ENCODE measurements at regions of chr1 and their contacts with region 1.

Region 1: GRCh38 chr1:205584732-205585131 is 47.1 kb downstream of the ELK4 start:
- DNase-seq: no peak
- ATAC-seq: no peak
- H3K4me3 ChIP-seq: no peak overlapping the region
- H3K27ac ChIP-seq: no peak overlapping the region
- H3K4me1 ChIP-seq: peaks cover 0 to 30% (median 11%) of the 10 kb centered on the region in 9 donors
- H3K27me3 ChIP-seq: peaks cover 0 to 9% (median 0%) of the 10 kb centered on the region in 7 donors
- CTCF ChIP-seq: peak in 6 of 9 donors; percentile 19 to 43 (median 34)

Region 2: DNA sequence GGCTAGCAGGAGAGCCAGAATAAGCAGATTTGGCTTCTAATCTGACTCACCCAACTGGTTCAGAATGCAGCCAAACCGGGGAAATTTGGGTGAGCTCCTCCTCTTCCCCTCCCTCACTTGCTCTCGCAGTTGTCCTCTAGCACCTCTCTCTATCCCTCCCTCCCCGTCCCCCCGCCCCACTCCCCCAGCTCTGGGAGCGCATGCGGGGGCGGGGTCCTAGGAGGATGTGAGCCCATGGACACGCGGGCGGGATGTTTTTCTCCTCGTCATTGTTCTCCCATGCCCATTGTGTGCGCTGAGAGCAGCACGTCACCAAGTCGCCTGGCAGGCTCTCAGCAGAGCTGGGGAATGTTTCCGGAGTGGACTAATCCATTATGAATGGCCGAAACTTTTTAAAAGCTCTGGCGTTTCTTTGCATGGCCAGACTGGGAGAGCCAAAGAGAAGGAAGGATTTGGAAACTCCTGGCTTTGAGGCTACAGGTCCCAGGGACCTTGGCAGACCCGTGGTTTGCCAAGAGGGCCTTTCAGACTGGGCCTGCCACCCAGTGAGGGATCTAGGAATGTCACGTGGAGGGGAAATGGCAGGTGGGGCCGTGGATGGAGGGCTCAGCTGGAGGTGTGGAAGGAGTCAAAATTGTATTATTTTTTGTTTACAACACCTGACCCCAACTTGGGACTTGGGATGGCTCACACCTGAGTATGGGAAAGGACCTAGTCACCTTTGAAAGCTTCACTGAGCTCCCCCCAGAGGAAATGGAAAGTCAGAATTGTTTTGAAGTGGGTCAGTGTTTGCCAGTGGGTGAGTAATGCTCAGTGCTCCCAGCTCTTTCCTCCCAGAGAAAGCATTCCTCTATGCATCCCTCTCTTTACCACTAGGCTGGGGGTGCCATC is 41.1 kb before region 1 on chr1:
- intact Hi-C with region 1: loop called in 2 of 10 experiments (anchors 5 to 10 kb)
- DNase-seq: peak; percentile 75 to 88
- ATAC-seq: peak; percentile 90 to 95 (median 92)
- H3K4me3 ChIP-seq: peak overlapping the region in 8 of 10 donors; percentile 4 to 46 (median 36)
- H3K27ac ChIP-seq: peak overlapping the region; percentile 49 to 90 (median 86)
- H3K4me1 ChIP-seq: peaks cover 6 to 39% (median 19%) of the 10 kb centered on the region in 9 donors
- H3K27me3 ChIP-seq: peaks cover 0 to 61% (median 7%) of the 10 kb centered on the region in 7 donors
- CTCF ChIP-seq: no peak

Measured in heart right ventricle (tissue), 16 donors.